Cardiac septum (tissue), 1 donor: ENCODE measurements at regions of chrX and their contacts with region 1.

Region 1: GRCh38 chrX:40013266-40014195 is 84.2 kb downstream of the BCOR start:
- DNase-seq: peak; percentile 86

Region 2: GRCh38 chrX:39972340-39972739 is 41.2 kb before region 1 on chrX:
- intact Hi-C with region 1: loop called (anchors 5 kb)
- DNase-seq: no peak

Region 3: DNA sequence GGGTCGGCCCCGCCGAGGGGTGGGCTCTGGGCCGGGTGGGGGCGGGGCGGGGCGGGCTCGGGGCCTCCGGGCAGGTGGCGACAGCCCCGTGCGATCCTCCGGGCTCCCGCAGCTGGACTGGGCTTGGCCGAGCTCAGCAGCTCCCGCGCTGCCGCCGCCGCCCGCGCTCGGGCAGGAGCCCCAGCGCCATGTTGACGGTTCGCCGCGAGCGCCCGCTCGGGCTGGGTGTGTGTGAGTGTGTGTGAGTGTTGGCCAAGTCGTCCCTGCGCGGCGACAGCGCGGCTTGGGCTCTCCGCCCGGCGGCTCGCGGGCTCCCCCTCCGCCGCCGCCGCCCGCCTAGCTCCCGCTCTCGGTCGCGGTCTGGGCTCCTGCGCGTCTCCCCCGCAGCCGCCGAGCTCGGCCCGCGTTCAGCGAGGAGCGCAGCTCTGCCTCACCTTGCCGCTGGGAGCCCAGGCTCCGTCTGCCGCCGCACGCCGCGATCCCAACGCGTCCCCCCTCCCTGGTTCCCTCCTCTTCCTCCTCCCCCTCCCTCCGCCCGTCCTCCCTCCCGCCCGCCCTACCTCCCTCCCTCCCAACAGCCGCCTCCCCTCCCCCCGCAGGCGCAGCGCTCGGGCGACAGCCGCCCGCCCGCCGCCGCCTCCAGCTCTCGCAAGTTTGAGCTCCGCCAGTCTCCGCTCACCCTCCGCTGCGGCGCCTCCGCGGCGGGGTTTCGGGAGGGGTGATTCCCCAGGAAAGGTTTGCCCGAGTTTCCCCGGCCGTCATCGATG is 84.1 kb after region 1 on chrX and contains the start of gene BCOR:
- intact Hi-C with region 1: loop called (anchors 1 kb)
- DNase-seq: peak; percentile 84
- total RNA-seq, gene BCOR: 24.2 TPM

Region 4: GRCh38 chrX:40175511-40176350 is 162.2 kb after region 1 on chrX:
- intact Hi-C with region 1: loop called (anchors 5 kb)
- DNase-seq: peak; percentile 90

Region 5: GRCh38 chrX:40258909-40259308 is 245.4 kb after region 1 on chrX:
- intact Hi-C with region 1: no loop called
- DNase-seq: no peak